Activated CD8-positive, alpha-beta T cell treated with anti-CD3 and anti-CD28 coated beads for 36 hours (primary cell): ENCODE measurements at regions of chr9 and their contacts with region 1.

Region 1: DNA sequence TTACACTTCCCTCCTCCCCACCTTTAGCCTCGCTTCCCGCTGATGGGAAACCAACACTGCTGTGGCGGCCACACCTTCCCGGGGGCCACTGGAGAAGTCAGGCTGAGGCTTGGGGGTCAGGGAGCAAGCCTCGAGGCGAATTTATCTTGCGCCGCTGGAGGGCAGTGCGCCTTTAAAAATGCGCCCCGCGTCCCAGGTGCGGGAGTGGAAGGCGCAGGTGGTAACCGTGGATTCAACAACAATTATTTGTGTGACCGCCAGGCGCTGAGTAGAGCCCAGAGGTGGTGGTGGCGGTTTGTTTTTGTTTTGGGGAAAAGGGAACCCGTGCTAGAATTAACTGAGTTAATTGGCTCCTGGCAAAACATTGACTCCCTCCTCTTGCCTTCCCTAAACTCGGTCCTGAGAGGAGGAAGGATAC is 1.1 kb downstream of the CFAP77 start:
- DNase-seq: peak; percentile 82
- ATAC-seq: peak; percentile 59
- H3K4me3 Mint-ChIP-seq: peak overlapping the region; percentile 51
- H3K27ac Mint-ChIP-seq: no peak overlapping the region
- H3K4me1 Mint-ChIP-seq: peaks cover 30% of the 10 kb centered on the region
- H3K27me3 Mint-ChIP-seq: peaks cover 43% of the 10 kb centered on the region
- CTCF ChIP-seq: peak; percentile 93

Region 2: GRCh38 chr9:132387133-132387532 is 24.0 kb before region 1 on chr9:
- CTCF ChIA-PET with region 1: no interaction called
- POLR2A ChIA-PET with region 1: no interaction called
- intact Hi-C with region 1: no loop called
- DNase-seq: no peak
- ATAC-seq: no peak
- H3K4me3 Mint-ChIP-seq: no peak overlapping the region
- H3K27ac Mint-ChIP-seq: no peak overlapping the region
- H3K4me1 Mint-ChIP-seq: peaks cover 21% of the 10 kb centered on the region
- H3K27me3 Mint-ChIP-seq: no peaks in the 10 kb centered on the region
- CTCF ChIP-seq: no peak

Region 3: GRCh38 chr9:132486706-132487350 is 75.7 kb after region 1 on chr9:
- CTCF ChIA-PET with region 1: interaction called, 14 read pairs
- POLR2A ChIA-PET with region 1: no interaction called
- intact Hi-C with region 1: loop called (anchors 5 kb)
- DNase-seq: peak; percentile 88
- ATAC-seq: peak; percentile 93
- H3K4me3 Mint-ChIP-seq: peak overlapping the region; percentile 42
- H3K27ac Mint-ChIP-seq: peak overlapping the region; percentile 87
- H3K4me1 Mint-ChIP-seq: peaks cover 27% of the 10 kb centered on the region
- H3K27me3 Mint-ChIP-seq: peaks cover 48% of the 10 kb centered on the region
- CTCF ChIP-seq: no peak

Region 4: DNA sequence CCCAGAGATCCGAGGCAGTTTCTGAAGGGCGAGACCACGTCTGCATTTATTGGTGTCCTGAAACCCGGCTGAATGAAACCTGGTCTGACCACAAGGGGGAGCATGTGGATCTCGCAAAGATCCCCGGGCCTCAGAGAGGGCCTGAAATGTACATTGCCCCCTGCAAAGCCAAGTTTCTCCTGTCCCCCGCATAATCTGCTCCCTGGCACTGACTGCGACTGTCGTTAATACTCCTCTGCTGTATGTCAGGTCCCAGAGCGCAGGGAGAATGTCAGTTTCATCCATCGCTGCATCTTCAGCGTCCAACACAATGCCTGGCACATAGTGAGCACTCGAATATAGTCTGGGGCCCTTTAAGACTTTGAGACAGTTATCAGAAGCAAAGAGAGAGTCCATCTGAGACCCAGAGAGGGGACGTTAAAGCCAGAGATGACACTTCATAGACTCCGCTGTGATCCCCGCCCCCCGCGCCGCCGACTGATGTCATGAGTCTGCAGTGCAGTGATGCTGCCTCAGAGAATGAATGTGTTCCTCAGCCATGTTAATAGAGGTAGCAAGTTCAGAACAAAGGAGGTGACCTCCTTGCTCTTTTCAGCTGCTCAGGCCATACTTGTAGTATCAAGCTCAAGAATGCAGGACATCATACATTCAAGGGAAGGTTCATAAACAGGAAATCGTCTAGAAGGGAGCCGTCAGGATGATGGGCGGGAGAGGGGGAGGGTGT is 96.8 kb after region 1 on chr9:
- CTCF ChIA-PET with region 1: interaction called, 22 read pairs
- POLR2A ChIA-PET with region 1: no interaction called
- intact Hi-C with region 1: loop called (anchors 5 kb)
- DNase-seq: peak; percentile 84
- ATAC-seq: peak; percentile 71
- H3K4me3 Mint-ChIP-seq: no peak overlapping the region
- H3K27ac Mint-ChIP-seq: no peak overlapping the region
- H3K4me1 Mint-ChIP-seq: peaks cover 3% of the 10 kb centered on the region
- H3K27me3 Mint-ChIP-seq: peaks cover 17% of the 10 kb centered on the region
- CTCF ChIP-seq: peak; percentile 87

Region 5: DNA sequence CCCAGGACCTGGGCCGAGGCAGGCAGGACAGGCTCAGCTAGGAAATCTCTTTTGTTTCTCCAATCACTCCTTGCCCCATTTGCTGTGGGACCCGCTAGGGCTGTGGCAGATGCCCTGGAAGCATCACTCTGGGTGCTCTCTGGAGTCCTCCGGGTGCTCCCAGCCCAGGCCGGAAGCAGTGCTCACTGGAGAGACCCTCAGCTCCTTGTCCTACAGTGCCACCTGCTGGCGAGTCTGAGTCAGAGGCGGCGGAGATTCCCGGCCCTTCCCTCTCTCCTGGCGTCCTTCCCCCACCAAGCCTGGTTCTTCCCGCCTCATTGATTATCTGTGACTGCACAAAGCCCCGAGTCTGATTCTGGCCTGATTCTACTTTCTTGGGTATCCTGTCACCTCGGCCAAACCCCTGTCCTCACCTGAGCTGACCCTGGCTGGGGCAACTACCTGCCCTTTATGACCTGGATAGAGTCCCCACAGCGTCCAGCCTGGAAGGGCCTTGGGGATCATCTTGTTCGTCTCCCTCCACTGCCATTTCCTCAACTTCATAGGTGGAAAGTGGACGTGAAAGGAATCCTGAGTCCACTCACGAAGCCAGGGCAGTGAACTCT is 164.0 kb after region 1 on chr9:
- CTCF ChIA-PET with region 1: interaction called, 54 read pairs
- POLR2A ChIA-PET with region 1: interaction called, 5 read pairs
- intact Hi-C with region 1: loop called (anchors 2 kb)
- DNase-seq: peak; percentile 79
- ATAC-seq: peak; percentile 91
- H3K4me3 Mint-ChIP-seq: no peak overlapping the region
- H3K27ac Mint-ChIP-seq: no peak overlapping the region
- H3K4me1 Mint-ChIP-seq: no peaks in the 10 kb centered on the region
- H3K27me3 Mint-ChIP-seq: peaks cover 49% of the 10 kb centered on the region
- CTCF ChIP-seq: peak; percentile 94

Region 6: DNA sequence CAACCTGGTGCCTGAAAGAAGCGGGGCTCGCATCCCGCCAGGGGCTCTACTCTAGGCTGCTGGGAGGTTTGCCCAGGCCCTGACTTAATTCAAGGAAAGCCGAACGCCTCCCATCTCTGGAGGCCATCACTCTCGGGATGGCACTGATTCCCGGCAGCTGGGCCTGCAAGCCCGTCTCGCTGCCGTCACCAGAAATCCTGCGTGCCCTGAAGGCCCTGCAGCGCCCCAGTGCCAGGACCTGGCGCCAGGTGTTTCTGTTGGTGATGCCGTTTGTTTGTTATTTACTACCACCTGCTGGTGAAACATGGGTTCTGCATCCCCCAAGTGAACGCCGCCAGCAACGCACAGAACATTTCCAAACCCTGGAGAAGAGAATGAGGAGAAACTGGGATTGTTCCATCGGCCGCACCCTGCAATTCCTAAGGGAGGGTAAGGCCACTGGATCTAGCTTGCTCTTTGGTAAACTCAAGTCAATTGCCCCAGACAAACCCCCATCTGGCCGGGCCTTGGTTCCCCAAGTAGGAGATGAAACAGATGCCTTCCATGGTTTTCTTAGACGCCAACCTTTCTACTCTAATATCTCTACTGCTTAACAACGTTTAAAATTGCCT is 389.0 kb after region 1 on chr9:
- CTCF ChIA-PET with region 1: interaction called, 3 read pairs
- POLR2A ChIA-PET with region 1: no interaction called
- intact Hi-C with region 1: loop called (anchors 10 kb)
- DNase-seq: peak; percentile 73
- ATAC-seq: peak; percentile 94
- H3K4me3 Mint-ChIP-seq: no peak overlapping the region
- H3K27ac Mint-ChIP-seq: no peak overlapping the region
- H3K4me1 Mint-ChIP-seq: peaks cover 2% of the 10 kb centered on the region
- H3K27me3 Mint-ChIP-seq: peaks cover 16% of the 10 kb centered on the region
- CTCF ChIP-seq: peak; percentile 96